Endothelial cell of umbilical vein (primary cell): ENCODE measurements at regions of chr2 and their contacts with region 1.

Region 1: DNA sequence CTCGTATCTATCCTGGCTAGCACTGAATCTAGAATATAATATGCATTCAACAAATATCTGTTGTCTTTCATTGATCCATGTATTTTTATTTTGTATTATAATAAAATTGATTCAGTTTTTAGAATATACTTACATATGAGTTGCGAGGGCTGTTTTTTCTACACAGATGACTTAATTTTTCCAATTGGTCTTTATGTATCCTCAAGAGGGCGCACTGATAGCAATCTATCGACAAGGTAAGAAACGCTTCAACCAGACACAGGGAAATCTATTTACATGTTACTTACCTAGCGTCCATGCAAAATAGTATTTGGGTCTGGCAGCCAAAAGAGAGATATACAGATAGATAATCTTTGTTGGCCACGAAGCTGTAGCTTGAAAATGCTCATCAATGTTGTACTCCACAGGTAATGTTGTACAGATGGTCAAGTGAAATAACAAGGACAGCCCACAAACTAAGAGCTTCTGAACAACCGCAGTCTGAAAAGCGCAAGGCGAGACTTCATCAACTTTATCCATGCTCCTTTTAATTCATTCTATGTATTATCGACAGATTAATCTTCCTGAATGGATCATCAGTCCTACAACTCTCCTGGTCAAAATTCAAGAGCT is 35.5 kb upstream of the KIDINS220 start:
- DNase-seq: peak; percentile 70
- H3K4me3 ChIP-seq: no peak overlapping the region
- H3K27ac ChIP-seq: no peak overlapping the region
- H3K4me1 ChIP-seq: no peaks in the 10 kb centered on the region
- H3K27me3 ChIP-seq: no peaks in the 10 kb centered on the region
- CTCF ChIP-seq: peak; percentile 30 to 43
- POLR2A ChIP-seq: no peak

Region 2: GRCh38 chr2:8551622-8552074 is 321.3 kb before region 1 on chr2:
- CTCF ChIA-PET with region 1: no interaction called
- POLR2A ChIA-PET with region 1: no interaction called
- dilution Hi-C with region 1: no loop called
- intact Hi-C with region 1: no loop called
- DNase-seq: no peak
- H3K4me3 ChIP-seq: no peak overlapping the region
- H3K27ac ChIP-seq: no peak overlapping the region
- H3K4me1 ChIP-seq: no peaks in the 10 kb centered on the region
- H3K27me3 ChIP-seq: no peaks in the 10 kb centered on the region
- CTCF ChIP-seq: no peak
- POLR2A ChIP-seq: no peak

Region 3: DNA sequence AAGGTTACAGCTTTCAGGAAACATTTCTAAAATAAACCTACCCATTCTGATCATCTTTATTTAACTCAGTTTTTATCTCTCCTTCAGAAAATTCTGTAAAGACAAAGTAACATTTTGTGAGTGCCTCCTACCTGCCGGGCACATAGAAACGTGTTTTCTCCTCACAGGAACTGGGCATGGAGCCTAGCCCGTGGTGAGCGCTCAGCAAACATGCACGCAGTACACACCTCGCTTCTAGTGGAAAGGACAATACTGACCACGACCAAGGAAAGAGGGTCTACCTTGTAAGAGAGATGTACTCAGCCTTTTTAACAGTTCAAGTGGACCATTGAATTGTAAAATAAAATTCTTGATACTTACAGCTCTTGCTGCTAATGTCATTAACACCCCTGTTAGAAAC is 10.7 kb before region 1 on chr2:
- CTCF ChIA-PET with region 1: interaction called, 11 read pairs
- POLR2A ChIA-PET with region 1: no interaction called
- dilution Hi-C with region 1: no loop called
- intact Hi-C with region 1: no loop called
- DNase-seq: no peak
- H3K4me3 ChIP-seq: no peak overlapping the region
- H3K27ac ChIP-seq: no peak overlapping the region
- H3K4me1 ChIP-seq: no peaks in the 10 kb centered on the region
- H3K27me3 ChIP-seq: no peaks in the 10 kb centered on the region
- CTCF ChIP-seq: no peak
- POLR2A ChIP-seq: no peak

Region 4: GRCh38 chr2:9112079-9112721 is 239.3 kb after region 1 on chr2:
- CTCF ChIA-PET with region 1: interaction called, 16 read pairs
- POLR2A ChIA-PET with region 1: no interaction called
- dilution Hi-C with region 1: no loop called
- intact Hi-C with region 1: no loop called
- DNase-seq: no peak
- H3K4me3 ChIP-seq: no peak overlapping the region
- H3K27ac ChIP-seq: no peak overlapping the region
- H3K4me1 ChIP-seq: no peaks in the 10 kb centered on the region
- H3K27me3 ChIP-seq: no peaks in the 10 kb centered on the region
- CTCF ChIP-seq: no peak
- POLR2A ChIP-seq: no peak